ENCODE measurements at regions of chr2 and their contacts with region 1.

Region 1: GRCh38 chr2:179715871-179716270 is 145.5 kb downstream of the ZNF385B start:
- DNase-seq: no peak
- ATAC-seq: no peak
- H3K4me3 ChIP-seq: no peak overlapping the region
- H3K27ac ChIP-seq: no peak overlapping the region
- H3K4me1 ChIP-seq: peaks cover 13% of the 10 kb centered on the region
- H3K27me3 ChIP-seq: no peaks in the 10 kb centered on the region
- CTCF ChIP-seq: no peak

Region 2: DNA sequence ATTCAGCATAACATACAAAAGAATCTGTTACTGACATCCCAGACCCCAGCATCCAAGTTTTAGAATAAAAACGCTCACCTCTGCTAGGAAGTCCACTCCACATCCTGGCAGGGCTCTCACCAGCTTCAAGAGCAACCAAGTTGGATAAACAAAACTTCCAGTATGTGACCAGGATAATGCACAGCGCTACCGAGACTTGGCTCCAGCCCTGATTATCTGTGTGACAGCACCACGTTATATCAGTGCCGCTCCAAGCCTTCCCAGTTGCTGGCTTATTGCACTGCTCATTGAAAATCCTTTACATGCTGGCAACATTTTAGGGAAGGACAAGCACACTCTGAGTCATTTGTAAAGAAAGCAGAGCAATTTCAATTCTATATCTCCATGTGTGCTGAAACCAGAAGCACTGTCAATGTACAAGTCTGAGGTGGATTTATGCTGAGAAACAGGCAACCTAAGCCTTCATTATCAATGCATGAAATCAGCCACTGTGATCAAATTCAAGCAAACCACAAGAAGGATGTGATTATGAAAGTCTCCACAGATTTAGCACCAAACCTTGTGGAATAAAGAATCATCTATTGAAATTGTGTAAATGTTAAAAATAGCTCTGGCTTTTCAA is 29.9 kb after region 1 on chr2:
- CTCF ChIA-PET with region 1: no interaction called
- POLR2A ChIA-PET with region 1: no interaction called
- intact Hi-C with region 1: loop called (anchors 1 kb)
- DNase-seq: no peak
- ATAC-seq: no peak
- H3K4me3 ChIP-seq: no peak overlapping the region
- H3K27ac ChIP-seq: no peak overlapping the region
- H3K4me1 ChIP-seq: no peaks in the 10 kb centered on the region
- H3K27me3 ChIP-seq: no peaks in the 10 kb centered on the region
- CTCF ChIP-seq: no peak

Region 3: GRCh38 chr2:179818546-179818945 is 102.7 kb after region 1 on chr2:
- CTCF ChIA-PET with region 1: no interaction called
- POLR2A ChIA-PET with region 1: no interaction called
- intact Hi-C with region 1: no loop called
- DNase-seq: peak; percentile 37
- ATAC-seq: peak; percentile 72
- H3K4me3 ChIP-seq: no peak overlapping the region
- H3K27ac ChIP-seq: no peak overlapping the region
- H3K4me1 ChIP-seq: peaks cover 17% of the 10 kb centered on the region
- H3K27me3 ChIP-seq: no peaks in the 10 kb centered on the region
- CTCF ChIP-seq: no peak

Measured in PC-3 (cell line).